ENCODE measurements at regions of chr5 and their contacts with region 1.

Region 1: DNA sequence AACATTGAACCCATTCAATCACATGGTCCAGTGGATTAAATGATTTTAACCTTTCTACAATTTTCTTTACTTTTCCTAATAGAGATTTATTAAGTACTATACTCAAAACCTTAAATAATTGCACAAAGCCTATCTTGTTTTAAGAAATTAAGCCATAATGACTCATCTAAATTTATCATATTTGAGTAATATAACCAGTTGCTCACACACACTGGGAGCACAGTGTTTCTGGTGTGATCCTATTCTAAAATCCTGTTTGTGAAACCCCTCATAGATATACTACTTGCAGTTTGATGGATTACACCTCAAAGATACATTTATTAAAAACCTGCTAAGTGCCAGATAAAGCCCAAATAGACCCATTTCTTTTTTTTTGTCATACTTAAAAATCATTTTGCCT is 668.3 kb upstream of the CDH18 start:
- DNase-seq: no peak
- ATAC-seq: no peak
- H3K4me3 ChIP-seq: no peak overlapping the region
- H3K4me3 Mint-ChIP-seq: no peak overlapping the region
- H3K27ac ChIP-seq: no peak overlapping the region
- H3K27ac Mint-ChIP-seq: no peak overlapping the region
- H3K4me1 ChIP-seq: no peaks in the 10 kb centered on the region
- H3K4me1 Mint-ChIP-seq: no peaks in the 10 kb centered on the region
- H3K27me3 ChIP-seq: no peaks in the 10 kb centered on the region
- H3K27me3 Mint-ChIP-seq: no peaks in the 10 kb centered on the region
- CTCF ChIP-seq: no peak

Region 2: GRCh38 chr5:20636686-20637085 is 19.6 kb before region 1 on chr5:
- CTCF ChIA-PET with region 1: no interaction called
- POLR2A ChIA-PET with region 1: no interaction called
- intact Hi-C with region 1: loop called in 1 of 2 experiments (anchors 2 kb)
- DNase-seq: no peak
- ATAC-seq: no peak
- H3K4me3 ChIP-seq: no peak overlapping the region
- H3K4me3 Mint-ChIP-seq: no peak overlapping the region
- H3K27ac ChIP-seq: no peak overlapping the region
- H3K27ac Mint-ChIP-seq: no peak overlapping the region
- H3K4me1 ChIP-seq: no peaks in the 10 kb centered on the region
- H3K4me1 Mint-ChIP-seq: no peaks in the 10 kb centered on the region
- H3K27me3 ChIP-seq: no peaks in the 10 kb centered on the region
- H3K27me3 Mint-ChIP-seq: no peaks in the 10 kb centered on the region
- CTCF ChIP-seq: no peak